Heart right ventricle (tissue), 16 donors: ENCODE measurements at regions of chr5 and their contacts with region 1.

Region 1: DNA sequence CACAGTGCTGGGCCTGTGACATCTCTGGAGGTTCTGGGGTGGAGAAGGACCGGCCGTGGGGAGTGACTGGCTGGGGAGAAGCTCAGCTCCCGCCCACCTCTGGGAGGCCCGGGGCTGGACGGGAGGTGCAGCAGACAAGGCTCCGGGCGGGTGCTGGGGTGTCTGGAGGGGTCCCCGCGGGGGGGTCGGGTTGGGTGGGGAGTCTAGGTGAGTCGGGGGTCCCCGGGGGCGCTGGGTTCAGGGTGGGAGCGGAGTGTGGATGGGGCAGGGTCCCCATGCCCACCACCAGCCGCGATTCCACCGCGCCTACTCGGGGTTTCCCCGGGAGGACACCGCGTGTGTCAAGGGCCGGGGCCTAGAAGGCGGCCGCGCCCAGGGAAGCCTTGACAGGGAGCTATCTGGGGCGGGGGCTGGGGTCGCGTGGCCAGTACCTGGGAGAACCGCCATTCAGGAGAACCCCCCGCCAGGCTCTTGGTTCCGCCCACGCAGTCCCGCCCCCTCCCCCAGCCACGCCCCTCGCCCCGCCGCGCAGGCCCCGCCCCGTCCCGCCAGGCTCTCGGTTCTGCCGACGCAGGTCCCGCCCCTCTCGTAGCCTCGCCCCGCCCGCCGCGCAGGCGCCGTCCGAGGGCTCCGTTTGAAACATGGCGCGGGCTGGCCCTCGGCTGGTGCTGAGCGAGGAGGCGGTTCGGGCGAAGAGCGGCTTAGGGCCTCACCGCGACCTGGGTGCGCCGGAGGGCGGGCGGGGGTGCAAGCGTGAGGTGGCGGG is at the start of gene CEP72:
- DNase-seq: peak; percentile 91 to 94
- ATAC-seq: peak; percentile 97 to 98 (median 98)
- H3K4me3 ChIP-seq: peak within 1 kb of the TSS; percentile 34 to 93 (median 82)
- H3K27ac ChIP-seq: peak within 1 kb of the TSS in 6 of 10 donors; percentile 13 to 77 (median 39)
- H3K4me1 ChIP-seq: peaks cover 0 to 25% (median 11%) of the 10 kb centered on the region in 9 donors
- H3K27me3 ChIP-seq: peaks cover 0 to 19% (median 4%) of the 10 kb centered on the region in 7 donors
- CTCF ChIP-seq: no peak
- total RNA-seq, gene CEP72: 0.66 to 2.0 (median 1.4) TPM

Region 2: DNA sequence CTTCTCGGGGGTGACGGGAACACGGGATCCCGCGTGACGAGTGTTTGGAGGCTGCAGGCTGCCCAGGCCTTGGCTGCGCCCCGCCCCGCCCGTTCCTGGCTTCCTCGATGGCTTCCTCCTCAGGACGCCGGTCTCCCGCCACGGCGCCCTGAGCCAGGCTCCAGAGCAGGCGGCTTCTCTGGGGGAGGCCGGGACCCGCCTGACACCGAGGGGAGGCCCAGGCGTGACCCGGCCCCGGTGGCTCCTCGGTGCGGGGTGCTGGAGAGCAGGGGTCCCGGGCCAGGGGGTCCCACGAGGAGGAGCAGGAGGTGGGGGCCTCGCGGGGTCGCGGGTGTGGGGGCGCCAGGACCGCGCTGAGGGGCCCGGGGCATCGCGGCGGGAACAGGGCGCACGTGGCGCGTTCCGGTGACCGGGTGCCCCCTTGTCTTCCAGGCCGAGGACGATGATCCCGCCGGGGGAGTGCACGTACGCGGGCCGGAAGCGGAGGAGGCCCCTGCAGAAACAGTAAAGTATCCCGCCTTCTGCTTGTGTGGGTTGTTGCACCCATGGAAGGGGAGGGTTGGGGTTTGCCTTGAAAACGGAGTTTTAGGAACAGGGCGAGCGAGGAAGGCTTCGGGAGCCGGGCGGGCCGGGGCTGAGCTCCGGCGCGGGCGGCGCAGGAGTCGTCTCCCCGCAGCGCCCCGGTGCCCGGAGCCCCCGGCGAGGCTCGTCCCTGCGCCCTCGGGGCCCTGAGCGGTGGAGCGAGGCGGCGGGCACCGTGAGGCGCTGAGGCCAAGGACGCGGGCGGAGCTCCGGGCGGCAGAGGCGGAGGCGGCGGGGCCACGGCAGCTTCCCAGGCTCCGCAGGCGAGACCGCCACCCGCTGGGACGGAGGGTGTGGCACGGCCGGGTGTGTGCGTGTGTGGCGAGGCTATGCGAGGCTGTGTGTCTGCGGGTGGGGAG is 268.2 kb before region 1 on chr5:
- intact Hi-C with region 1: no loop called
- DNase-seq: peak in 1 of 2 donors; percentile 68
- ATAC-seq: peak; percentile 45 to 87 (median 75)
- H3K4me3 ChIP-seq: peak overlapping the region; percentile 6 to 56 (median 37)
- H3K27ac ChIP-seq: no peak overlapping the region
- H3K4me1 ChIP-seq: peaks cover 0 to 5% (median 0%) of the 10 kb centered on the region in 9 donors
- H3K27me3 ChIP-seq: peaks cover 0 to 48% (median 39%) of the 10 kb centered on the region in 7 donors
- CTCF ChIP-seq: peak in 1 of 9 donors; percentile 13

Region 3: DNA sequence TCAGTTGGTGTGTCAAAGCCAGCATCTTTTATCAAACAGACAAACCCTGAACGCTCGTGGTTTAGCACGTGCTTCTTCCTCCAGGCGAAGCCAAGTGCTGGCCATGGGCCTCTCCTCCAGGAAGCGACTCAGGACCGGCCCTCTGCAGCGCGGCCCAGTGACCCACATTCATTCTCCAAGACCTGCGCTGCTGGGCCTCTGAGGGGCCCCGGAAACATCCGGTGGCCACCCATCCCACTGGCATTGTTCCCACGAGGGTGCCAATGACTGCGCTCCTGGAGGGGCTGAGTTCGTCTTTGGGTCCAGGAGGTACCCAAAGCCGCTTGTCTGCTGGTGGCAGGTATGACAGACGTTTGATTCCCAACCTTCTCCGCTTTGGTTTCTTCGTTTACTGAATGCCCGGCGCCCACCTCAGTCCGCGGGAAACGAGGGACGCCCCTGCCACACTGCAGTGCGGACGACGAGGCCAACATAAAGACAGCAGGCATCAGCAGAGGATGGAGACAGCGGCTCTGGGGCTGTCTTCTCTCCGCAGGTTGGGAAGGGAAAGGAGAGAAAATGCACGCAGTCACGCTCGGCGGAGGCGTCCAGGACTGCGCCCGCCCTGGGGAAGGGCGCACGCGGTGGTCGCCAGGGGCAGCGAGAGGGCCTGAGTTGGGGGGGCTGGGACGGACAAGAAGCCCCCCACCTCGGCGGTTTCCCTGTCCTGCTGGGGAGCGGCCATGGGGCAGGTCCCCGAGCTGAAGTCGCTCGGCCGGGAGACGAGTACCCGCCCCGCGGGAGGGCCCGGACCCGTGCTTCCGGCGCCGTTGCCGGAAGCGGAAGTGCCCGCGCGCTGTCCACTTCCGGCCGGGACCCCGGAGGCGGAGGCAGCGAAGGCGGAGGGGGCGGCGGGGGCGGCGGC is 169.3 kb before region 1 on chr5 and contains the start of gene EXOC3:
- intact Hi-C with region 1: loop called in 1 of 10 experiments (anchors 10 kb)
- DNase-seq: peak; percentile 63 to 80
- ATAC-seq: peak; percentile 89 to 96 (median 94)
- H3K4me3 ChIP-seq: peak within 1 kb of the TSS; percentile 62 to 99 (median 87)
- H3K27ac ChIP-seq: peak within 1 kb of the TSS; percentile 64 to 95 (median 87)
- H3K4me1 ChIP-seq: peaks cover 3 to 44% (median 21%) of the 10 kb centered on the region in 9 donors
- H3K27me3 ChIP-seq: peaks cover 0 to 1% (median 0%) of the 10 kb centered on the region in 7 donors
- CTCF ChIP-seq: no peak
- total RNA-seq, gene EXOC3: 35.9 to 44.7 (median 41.0) TPM

Region 4: DNA sequence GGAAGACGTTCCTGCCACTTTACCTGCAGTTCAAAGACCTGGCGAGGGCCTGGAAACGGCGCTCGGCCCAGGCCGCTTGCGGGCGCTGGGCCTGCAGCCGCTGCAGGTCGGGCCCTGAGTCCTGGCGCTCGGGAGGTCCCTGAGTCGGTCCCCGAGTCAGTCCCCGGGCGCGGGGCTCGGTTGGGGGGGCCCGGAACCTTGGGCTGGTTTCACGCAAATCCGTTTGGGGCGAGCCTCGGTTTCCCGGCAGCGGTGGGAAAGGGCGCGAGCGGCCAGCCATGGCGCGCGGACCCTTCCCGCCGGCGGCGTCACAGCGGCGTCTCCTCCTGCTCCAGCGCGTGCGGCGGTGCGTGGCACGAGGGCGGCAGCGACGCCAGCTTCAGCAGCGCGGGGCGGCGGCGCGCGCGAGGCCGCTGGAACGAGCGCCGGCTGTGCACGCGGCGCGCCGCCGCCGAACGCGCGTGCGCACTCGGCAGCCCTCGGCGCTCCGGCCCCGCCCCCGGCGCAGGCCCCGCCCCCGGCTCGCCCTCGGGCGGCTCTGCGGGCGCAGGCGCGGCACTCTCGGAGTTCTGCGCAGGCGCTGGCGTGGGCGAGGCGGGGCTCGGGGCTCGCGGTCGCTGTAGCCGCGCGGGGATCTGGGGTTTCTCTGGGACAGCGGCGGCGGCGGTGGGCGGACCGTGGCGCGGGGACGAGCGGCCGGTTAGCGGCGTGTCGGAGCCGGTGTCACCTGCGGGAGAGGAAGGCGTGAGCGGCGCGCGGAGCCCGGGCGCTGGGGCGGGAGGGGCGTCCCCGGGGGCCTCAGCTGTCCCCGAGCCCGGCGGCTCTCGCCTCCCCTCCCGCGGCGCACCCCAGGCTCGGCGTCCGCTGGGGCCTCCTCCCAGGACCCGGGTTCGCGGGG is 139.0 kb before region 1 on chr5:
- intact Hi-C with region 1: loop called in 1 of 10 experiments (anchors 5 kb)
- DNase-seq: peak; percentile 91 to 92
- ATAC-seq: peak; percentile 83 to 94 (median 88)
- H3K4me3 ChIP-seq: peak overlapping the region; percentile 63 to 98 (median 90)
- H3K27ac ChIP-seq: peak overlapping the region; percentile 2 to 89 (median 81)
- H3K4me1 ChIP-seq: peaks cover 9 to 32% (median 22%) of the 10 kb centered on the region in 9 donors
- H3K27me3 ChIP-seq: peaks cover 0 to 39% (median 32%) of the 10 kb centered on the region in 7 donors
- CTCF ChIP-seq: peak in 1 of 9 donors; percentile 65